ENCODE measurements at regions of chr3 and their contacts with region 1.

Region 1: GRCh38 chr3:186617038-186617946 is 4.4 kb downstream of the AHSG start:
- DNase-seq: peak; percentile 97

Region 2: DNA sequence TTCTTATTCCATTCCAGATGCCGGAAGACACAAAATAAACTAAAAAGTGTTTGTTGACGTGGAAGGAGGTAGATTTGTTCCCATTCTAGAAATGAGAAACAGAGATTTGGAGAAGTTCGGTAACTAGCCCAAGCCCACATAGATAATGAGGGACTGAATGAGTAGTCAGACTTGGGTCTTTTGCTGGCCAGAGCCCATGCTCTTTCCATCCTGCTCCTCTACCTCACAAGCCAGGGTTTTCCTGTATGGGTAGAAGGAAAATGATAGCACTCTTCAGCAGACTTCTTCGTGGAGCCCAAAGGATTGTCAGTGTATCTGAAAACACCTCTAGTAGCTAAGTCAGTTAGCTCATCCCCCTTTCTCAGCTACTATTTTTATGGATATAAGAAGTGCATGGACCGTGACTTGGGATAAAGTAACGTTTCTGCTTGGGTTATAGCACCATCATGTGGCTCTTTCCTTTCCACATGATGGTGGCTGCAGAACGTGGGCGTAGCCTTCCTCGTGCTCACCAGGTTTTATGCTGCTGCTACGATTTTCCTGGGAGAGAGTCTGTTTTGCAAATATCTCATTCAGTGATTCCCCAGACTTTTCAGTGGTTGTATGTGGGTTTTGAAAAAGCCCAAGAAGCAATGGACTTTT is 339.9 kb before region 1 on chr3:
- intact Hi-C with region 1: no loop called
- DNase-seq: no peak

Region 3: DNA sequence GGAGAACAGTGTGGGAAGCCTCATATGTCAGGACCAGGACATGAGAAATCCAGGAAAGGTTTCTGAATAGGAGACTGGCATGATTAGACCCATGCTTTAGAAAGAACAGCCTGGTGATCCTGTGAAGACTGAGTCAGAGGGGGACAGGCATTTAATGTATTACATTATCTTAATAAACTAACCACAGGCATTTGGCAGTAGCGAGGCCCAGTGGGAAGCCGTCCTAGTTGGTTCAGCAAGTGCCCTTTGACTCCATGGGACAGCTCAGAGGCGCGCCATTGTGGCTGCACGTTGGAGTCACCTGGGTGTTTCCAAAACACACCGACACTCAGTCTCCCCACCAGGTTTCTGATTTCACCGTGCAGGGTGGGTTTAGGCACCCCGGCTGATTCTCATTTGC is 164.8 kb before region 1 on chr3:
- intact Hi-C with region 1: no loop called
- DNase-seq: no peak

Region 4: DNA sequence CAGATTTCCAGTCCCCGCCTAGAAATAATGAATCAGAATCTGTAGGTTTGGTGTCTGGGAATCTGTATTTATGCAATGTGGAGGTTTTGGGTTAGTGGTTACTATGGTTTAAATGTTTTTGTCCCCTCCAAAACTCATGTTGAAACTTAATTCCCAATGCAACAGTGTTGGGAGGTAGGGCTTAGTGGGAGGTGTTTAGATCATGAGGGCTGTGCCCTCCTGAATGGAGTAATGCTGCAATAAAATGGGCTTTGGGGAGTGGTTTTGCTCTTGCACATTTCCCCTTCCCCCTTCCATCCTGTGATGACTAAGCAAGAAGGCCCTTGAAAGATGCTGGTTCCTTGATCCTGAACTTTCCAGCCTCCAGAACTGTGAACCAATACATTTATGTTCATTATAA is 198.1 kb after region 1 on chr3:
- intact Hi-C with region 1: loop called (anchors 5 to 10 kb)
- DNase-seq: no peak

Region 5: DNA sequence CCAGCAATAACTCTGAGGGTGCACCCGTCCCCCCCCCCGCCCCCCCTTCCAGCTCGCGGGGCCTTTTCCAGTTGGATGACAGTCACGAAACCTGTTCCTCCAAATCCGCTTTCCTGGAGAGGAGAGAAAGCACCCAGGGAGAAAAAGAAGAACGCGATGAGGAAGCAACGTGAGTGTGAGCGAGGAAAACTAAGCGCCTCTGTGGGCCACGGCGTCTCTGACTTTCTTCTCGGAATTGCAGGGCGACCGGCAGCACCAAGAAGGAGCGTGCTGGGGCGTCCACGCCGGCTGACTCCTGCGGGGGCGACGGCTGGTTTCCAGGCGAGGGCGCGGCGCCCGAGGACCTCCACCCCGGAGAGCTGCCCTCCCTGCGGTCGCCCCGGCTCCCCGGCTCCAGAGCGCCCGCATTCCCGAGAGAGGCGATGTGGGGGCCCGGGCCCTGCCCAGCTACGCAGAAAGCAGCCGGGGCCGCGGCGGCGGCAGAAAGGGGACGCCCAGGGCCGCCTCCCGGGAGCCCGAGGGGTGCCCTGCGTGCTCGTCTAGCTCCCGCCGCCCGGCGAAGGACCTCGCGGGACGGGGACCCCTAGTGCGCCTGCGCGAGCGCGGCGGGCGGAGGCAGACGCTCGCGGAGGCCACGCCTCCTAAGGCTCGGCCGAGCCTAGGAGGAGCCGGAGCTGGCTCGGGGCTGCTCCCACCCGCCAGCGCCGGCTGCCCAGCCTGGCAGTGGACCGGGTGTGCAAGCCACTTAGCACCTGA is 209.9 kb after region 1 on chr3:
- intact Hi-C with region 1: loop called in 1 of 2 experiments (anchors 10 kb)
- DNase-seq: peak; percentile 95